B cell (primary cell): ENCODE measurements at regions of chr4 and their contacts with region 1.

Region 1: GRCh38 chr4:76949276-76950051 is at the start of gene SEPTIN11:
- DNase-seq: peak; percentile 89
- ATAC-seq: peak; percentile 80
- H3K4me3 ChIP-seq: peak within 1 kb of the TSS; percentile 34 to 87 (median 73)
- H3K4me3 Mint-ChIP-seq: peak within 1 kb of the TSS; percentile 93
- H3K27ac ChIP-seq: peak within 1 kb of the TSS in 1 of 2 donors; percentile 61
- H3K27ac Mint-ChIP-seq: peak within 1 kb of the TSS; percentile 86
- H3K4me1 ChIP-seq: peaks cover 10 to 16% of the 10 kb centered on the region in 2 donors
- H3K4me1 Mint-ChIP-seq: peaks cover 16% of the 10 kb centered on the region
- H3K27me3 ChIP-seq: no peaks in the 10 kb centered on the region
- H3K27me3 Mint-ChIP-seq: no peaks in the 10 kb centered on the region
- CTCF ChIP-seq: no peak
- total RNA-seq, gene SEPTIN11: 20.3 and 22.7 TPM in 2 replicates

Region 2: DNA sequence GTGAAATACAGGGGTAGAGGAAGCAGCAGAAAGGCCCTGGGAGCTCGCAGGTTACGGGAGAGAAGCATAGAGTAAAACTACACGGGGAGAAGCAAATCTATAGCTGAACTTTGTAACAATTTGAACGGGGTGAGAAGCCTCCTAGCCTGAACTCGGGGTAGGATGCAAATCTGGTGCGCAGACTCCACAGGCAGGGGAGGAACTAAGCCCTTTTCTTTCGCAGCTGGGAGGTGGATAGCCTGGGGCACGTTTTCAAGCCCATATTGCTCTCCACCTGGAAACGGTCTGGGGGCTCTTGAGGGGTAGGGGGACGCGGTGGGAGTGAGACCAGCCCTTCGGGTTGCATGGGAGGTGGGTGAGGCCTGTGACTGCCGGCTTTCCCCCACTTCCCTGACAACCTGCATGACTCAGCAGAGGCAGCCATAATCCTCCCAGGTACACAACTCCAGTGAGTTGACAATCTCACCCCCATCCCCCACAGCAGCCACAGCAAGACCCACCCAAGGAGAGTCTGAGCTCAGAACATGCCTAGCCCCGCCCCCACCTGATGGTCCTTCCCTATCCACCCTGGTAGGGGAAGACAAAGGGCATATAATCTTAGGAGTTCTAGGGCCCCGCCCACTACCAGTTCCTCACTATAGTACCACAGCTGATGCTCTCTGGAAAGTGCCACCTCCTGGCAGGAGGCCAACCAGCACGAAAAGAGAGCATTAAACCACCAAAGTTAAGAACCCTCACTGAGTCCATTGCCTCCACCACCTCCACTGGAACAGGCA is 81.4 kb before region 1 on chr4:
- CTCF ChIA-PET with region 1: no interaction called
- POLR2A ChIA-PET with region 1: no interaction called
- intact Hi-C with region 1: no loop called
- DNase-seq: no peak
- ATAC-seq: no peak
- H3K4me3 ChIP-seq: no peak overlapping the region
- H3K4me3 Mint-ChIP-seq: no peak overlapping the region
- H3K27ac ChIP-seq: no peak overlapping the region
- H3K27ac Mint-ChIP-seq: no peak overlapping the region
- H3K4me1 ChIP-seq: no peaks in the 10 kb centered on the region
- H3K4me1 Mint-ChIP-seq: no peaks in the 10 kb centered on the region
- H3K27me3 ChIP-seq: peaks cover 0 to 4% (median 0%) of the 10 kb centered on the region in 4 experiments
- H3K27me3 Mint-ChIP-seq: peaks cover 11% of the 10 kb centered on the region
- CTCF ChIP-seq: no peak

Region 3: GRCh38 chr4:77044461-77045150 is 95.1 kb after region 1 on chr4:
- CTCF ChIA-PET with region 1: interaction called, 7 read pairs
- POLR2A ChIA-PET with region 1: no interaction called
- intact Hi-C with region 1: loop called (anchors 10 kb)
- DNase-seq: peak; percentile 45
- ATAC-seq: no peak
- H3K4me3 ChIP-seq: no peak overlapping the region
- H3K4me3 Mint-ChIP-seq: no peak overlapping the region
- H3K27ac ChIP-seq: peak overlapping the region in 1 of 2 donors; percentile 22
- H3K27ac Mint-ChIP-seq: peak overlapping the region; percentile 23
- H3K4me1 ChIP-seq: peaks cover 11 to 12% of the 10 kb centered on the region in 2 donors
- H3K4me1 Mint-ChIP-seq: peaks cover 20% of the 10 kb centered on the region
- H3K27me3 ChIP-seq: no peaks in the 10 kb centered on the region
- H3K27me3 Mint-ChIP-seq: no peaks in the 10 kb centered on the region
- CTCF ChIP-seq: peak; percentile 68

Region 4: DNA sequence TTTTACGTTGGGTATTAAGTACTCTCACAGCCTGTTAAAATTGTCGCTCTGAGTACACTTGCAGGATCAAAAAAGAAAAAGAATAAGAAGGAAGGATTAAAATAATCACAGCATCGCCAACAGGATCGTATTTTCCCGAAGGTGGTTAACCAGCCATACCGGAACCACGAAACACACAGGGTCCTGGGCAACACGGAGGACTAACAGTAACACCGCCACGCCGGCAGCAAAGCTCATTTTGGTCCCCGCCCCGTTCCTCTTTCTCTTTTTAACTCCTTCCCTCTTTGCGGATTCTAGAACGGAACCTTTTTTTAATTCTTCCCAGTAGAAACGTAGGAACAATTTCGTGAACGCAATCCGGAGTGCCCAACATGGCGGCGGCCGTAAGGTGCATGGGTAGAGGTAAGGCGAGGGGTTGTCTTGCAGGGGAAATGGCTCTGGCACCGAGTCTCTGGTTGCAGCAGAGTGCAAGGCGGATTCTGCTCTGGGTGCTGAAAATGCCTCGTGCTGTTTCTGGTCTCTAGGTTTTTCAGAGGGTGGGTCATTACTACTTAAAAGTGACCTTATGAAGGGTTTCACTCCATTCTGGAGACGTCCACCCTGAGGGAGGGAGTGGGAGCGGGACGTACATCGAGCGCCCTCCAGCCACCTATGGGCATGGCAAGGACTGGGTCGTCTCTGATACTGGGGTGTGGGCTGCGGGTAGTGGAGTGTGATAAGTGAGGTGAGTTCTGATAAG is 913.2 kb after region 1 on chr4 and contains the start of gene MRPL1:
- CTCF ChIA-PET with region 1: no interaction called
- POLR2A ChIA-PET with region 1: no interaction called
- intact Hi-C with region 1: loop called (anchors 5 kb)
- DNase-seq: peak; percentile 95
- ATAC-seq: peak; percentile 86
- H3K4me3 ChIP-seq: peak within 1 kb of the TSS; percentile 68 to 98 (median 80)
- H3K4me3 Mint-ChIP-seq: peak within 1 kb of the TSS; percentile 99
- H3K27ac ChIP-seq: peak within 1 kb of the TSS; percentile 99 to 100
- H3K27ac Mint-ChIP-seq: peak within 1 kb of the TSS; percentile 98
- H3K4me1 ChIP-seq: peaks cover 17 to 21% of the 10 kb centered on the region in 2 donors
- H3K4me1 Mint-ChIP-seq: peaks cover 41% of the 10 kb centered on the region
- H3K27me3 ChIP-seq: no peaks in the 10 kb centered on the region
- H3K27me3 Mint-ChIP-seq: no peaks in the 10 kb centered on the region
- CTCF ChIP-seq: no peak
- total RNA-seq, gene MRPL1: 22.7 and 23.3 TPM in 2 replicates